ENCODE measurements at regions of chr1 and their contacts with region 1.

Region 1: DNA sequence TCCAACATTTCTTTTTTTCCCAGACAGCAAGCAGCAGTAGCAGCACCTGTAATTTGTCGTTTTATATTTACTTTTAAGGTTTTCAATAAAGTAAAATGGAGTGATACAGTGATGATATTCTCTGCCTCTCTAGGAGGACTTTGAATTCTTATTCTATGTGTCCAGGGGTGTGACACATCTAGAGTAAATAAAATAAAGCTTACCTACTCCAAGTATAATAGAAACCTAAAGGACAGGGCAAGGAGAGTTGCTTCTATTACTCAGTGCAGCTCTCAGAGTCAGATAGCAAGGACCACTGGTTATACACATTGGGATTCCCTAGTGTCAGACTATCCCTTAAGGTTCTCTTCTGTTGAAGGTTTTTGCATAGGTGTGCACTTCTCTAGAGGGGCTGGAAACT is 95.9 kb downstream of the LMO4 start:
- DNase-seq: no peak
- H3K4me3 Mint-ChIP-seq: no peak overlapping the region
- H3K27ac Mint-ChIP-seq: no peak overlapping the region
- H3K4me1 Mint-ChIP-seq: peaks cover 5% of the 10 kb centered on the region
- H3K27me3 Mint-ChIP-seq: peaks cover 8% of the 10 kb centered on the region
- CTCF ChIP-seq: no peak

Region 2: GRCh38 chr1:87402241-87403002 is 22.1 kb before region 1 on chr1:
- CTCF ChIA-PET with region 1: no interaction called
- POLR2A ChIA-PET with region 1: interaction called, 23 read pairs
- intact Hi-C with region 1: no loop called
- DNase-seq: no peak
- H3K4me3 Mint-ChIP-seq: no peak overlapping the region
- H3K27ac Mint-ChIP-seq: no peak overlapping the region
- H3K4me1 Mint-ChIP-seq: peaks cover 22% of the 10 kb centered on the region
- H3K27me3 Mint-ChIP-seq: no peaks in the 10 kb centered on the region
- CTCF ChIP-seq: no peak

Region 3: GRCh38 chr1:87464022-87464490 is 39.5 kb after region 1 on chr1:
- CTCF ChIA-PET with region 1: no interaction called
- POLR2A ChIA-PET with region 1: no interaction called
- intact Hi-C with region 1: no loop called
- DNase-seq: no peak
- H3K4me3 Mint-ChIP-seq: no peak overlapping the region
- H3K27ac Mint-ChIP-seq: no peak overlapping the region
- H3K4me1 Mint-ChIP-seq: no peaks in the 10 kb centered on the region
- H3K27me3 Mint-ChIP-seq: no peaks in the 10 kb centered on the region
- CTCF ChIP-seq: no peak

Measured in MCF 10A (cell line).